ENCODE measurements at regions of chr1 and their contacts with region 1.

Region 1: GRCh38 chr1:234722904-234723720 is 113.1 kb upstream of the IRF2BP2 start:
- DNase-seq: peak; percentile 82
- ATAC-seq: no peak
- H3K4me3 ChIP-seq: peak overlapping the region in 1 of 3 experiments; percentile 61; a peak in 2 of 6 replicates
- H3K27ac ChIP-seq: peak overlapping the region; percentile 99
- H3K4me1 ChIP-seq: peaks cover 97% of the 10 kb centered on the region
- H3K27me3 ChIP-seq: no peaks in the 10 kb centered on the region
- CTCF ChIP-seq: no peak
- EP300 ChIP-seq: peak in 1 of 2 experiments; percentile 4; a peak in 1 of 4 replicates
- POLR2A ChIP-seq: peak in 1 of 2 experiments; percentile 48; a peak in 1 of 4 replicates
- RAD21 ChIP-seq: no peak

Region 2: DNA sequence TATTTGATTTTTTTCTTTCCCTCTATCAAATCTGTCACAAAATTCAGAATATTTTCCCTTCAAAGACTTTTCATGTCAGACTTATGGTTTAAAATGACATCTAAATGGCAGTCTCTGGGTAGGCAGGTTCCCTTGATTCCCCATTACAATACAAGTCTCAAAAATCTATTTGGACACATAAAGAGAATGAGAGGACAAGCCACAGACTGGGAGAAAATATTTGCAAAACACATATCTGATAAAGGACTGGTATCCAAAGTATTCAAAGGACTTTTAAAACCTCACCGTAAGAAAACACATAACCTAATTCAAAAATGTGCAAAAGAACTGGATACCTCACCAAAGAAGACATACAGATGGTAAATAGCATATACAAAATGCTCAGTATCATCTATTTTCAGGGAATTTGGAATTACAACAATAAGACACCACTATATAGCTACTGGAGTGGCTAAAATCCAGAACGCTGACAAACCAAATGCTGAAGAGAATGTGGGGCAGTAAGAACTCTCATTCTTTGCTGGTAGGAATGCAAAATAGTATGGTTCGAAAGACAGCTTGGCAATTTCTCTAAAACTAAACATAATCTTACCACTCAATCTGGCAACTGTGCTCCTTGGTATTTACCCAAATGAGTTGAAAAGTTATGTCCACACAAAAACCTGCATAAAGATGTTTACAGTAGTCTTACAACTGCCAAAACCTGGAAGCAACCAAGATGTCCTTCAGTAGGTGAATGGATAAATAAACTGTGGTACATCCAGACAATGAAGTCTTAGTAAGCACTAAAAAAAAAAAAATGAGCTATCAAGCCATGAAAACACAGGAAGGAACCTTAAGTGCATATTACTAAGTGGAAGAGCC is 270.8 kb before region 1 on chr1:
- CTCF ChIA-PET with region 1: no interaction called
- POLR2A ChIA-PET with region 1: no interaction called
- in situ Hi-C with region 1: no loop called
- intact Hi-C with region 1: no loop called
- DNase-seq: no peak
- ATAC-seq: no peak
- H3K4me3 ChIP-seq: no peak overlapping the region
- H3K27ac ChIP-seq: no peak overlapping the region
- H3K4me1 ChIP-seq: peaks cover 12% of the 10 kb centered on the region; the same call in 1 of the 2 replicates
- H3K27me3 ChIP-seq: no peaks in the 10 kb centered on the region
- CTCF ChIP-seq: no peak
- EP300 ChIP-seq: no peak
- POLR2A ChIP-seq: no peak
- RAD21 ChIP-seq: no peak

Region 3: GRCh38 chr1:234589854-234590620 is 133.1 kb before region 1 on chr1:
- CTCF ChIA-PET with region 1: no interaction called
- POLR2A ChIA-PET with region 1: no interaction called
- in situ Hi-C with region 1: no loop called
- intact Hi-C with region 1: no loop called
- DNase-seq: no peak
- ATAC-seq: no peak; the same call in 2 of the 3 replicates
- H3K4me3 ChIP-seq: no peak overlapping the region
- H3K27ac ChIP-seq: no peak overlapping the region
- H3K4me1 ChIP-seq: peaks cover 10% of the 10 kb centered on the region; the same call in 1 of the 2 replicates
- H3K27me3 ChIP-seq: peaks cover 3% of the 10 kb centered on the region in 2 experiments; a peak in 2 of 5 replicates
- CTCF ChIP-seq: no peak
- EP300 ChIP-seq: no peak
- POLR2A ChIP-seq: no peak
- RAD21 ChIP-seq: no peak

Region 4: GRCh38 chr1:234617131-234617985 is 105.8 kb before region 1 on chr1:
- CTCF ChIA-PET with region 1: no interaction called
- POLR2A ChIA-PET with region 1: interaction called, 1,137 read pairs
- in situ Hi-C with region 1: loop called (anchors 5 kb)
- intact Hi-C with region 1: loop called (anchors 1 kb)
- DNase-seq: no peak
- ATAC-seq: no peak
- H3K4me3 ChIP-seq: no peak overlapping the region
- H3K27ac ChIP-seq: peak overlapping the region; percentile 99
- H3K4me1 ChIP-seq: peaks cover 97% of the 10 kb centered on the region
- H3K27me3 ChIP-seq: no peaks in the 10 kb centered on the region
- CTCF ChIP-seq: no peak
- EP300 ChIP-seq: no peak
- POLR2A ChIP-seq: no peak
- RAD21 ChIP-seq: no peak

Region 5: GRCh38 chr1:234645474-234645953 is 77.6 kb before region 1 on chr1:
- CTCF ChIA-PET with region 1: no interaction called
- POLR2A ChIA-PET with region 1: interaction called, 89 read pairs
- in situ Hi-C with region 1: no loop called
- intact Hi-C with region 1: no loop called
- DNase-seq: no peak
- ATAC-seq: no peak
- H3K4me3 ChIP-seq: no peak overlapping the region
- H3K27ac ChIP-seq: peak overlapping the region; percentile 83
- H3K4me1 ChIP-seq: peaks cover 63% of the 10 kb centered on the region
- H3K27me3 ChIP-seq: no peaks in the 10 kb centered on the region
- CTCF ChIP-seq: no peak
- EP300 ChIP-seq: no peak
- POLR2A ChIP-seq: no peak
- RAD21 ChIP-seq: no peak

Region 6: DNA sequence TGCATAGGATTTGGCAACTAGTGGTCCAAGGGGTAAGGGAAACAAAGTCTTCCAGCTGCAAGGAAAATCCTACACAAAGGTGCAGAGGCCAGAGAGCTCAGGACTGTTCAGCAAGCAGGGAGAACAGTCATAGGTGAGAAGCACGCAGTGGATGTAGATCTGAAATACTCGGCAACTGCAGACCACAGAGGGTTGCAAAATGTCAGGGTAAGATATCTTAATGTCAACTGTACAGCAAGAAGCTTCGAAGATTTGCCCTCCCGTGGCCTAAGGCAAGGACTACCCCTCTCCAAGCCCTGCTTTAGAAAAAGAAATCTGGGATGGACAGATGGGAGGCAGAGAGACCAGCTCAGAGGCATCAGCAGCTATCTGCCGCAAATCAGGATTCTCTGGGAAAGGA is 40.3 kb after region 1 on chr1:
- CTCF ChIA-PET with region 1: no interaction called
- POLR2A ChIA-PET with region 1: interaction called, 97 read pairs
- in situ Hi-C with region 1: no loop called
- intact Hi-C with region 1: loop called (anchors 2 kb)
- DNase-seq: no peak
- ATAC-seq: no peak
- H3K4me3 ChIP-seq: no peak overlapping the region
- H3K27ac ChIP-seq: peak overlapping the region; percentile 41
- H3K4me1 ChIP-seq: peaks cover 80% of the 10 kb centered on the region
- H3K27me3 ChIP-seq: no peaks in the 10 kb centered on the region
- CTCF ChIP-seq: no peak
- EP300 ChIP-seq: no peak
- POLR2A ChIP-seq: no peak
- RAD21 ChIP-seq: no peak

Region 7: GRCh38 chr1:234823191-234824176 is 100.4 kb after region 1 on chr1:
- CTCF ChIA-PET with region 1: no interaction called
- POLR2A ChIA-PET with region 1: no interaction called
- in situ Hi-C with region 1: no loop called
- intact Hi-C with region 1: no loop called
- DNase-seq: no peak
- ATAC-seq: no peak
- H3K4me3 ChIP-seq: no peak overlapping the region
- H3K27ac ChIP-seq: no peak overlapping the region
- H3K4me1 ChIP-seq: peaks cover 17% of the 10 kb centered on the region
- H3K27me3 ChIP-seq: no peaks in the 10 kb centered on the region
- CTCF ChIP-seq: no peak
- EP300 ChIP-seq: no peak
- POLR2A ChIP-seq: no peak
- RAD21 ChIP-seq: no peak

Region 8: GRCh38 chr1:234875953-234876855 is 153.1 kb after region 1 on chr1:
- CTCF ChIA-PET with region 1: no interaction called
- POLR2A ChIA-PET with region 1: interaction called, 96 read pairs
- in situ Hi-C with region 1: loop called (anchors 5 kb)
- intact Hi-C with region 1: loop called (anchors 2 kb)
- DNase-seq: peak; percentile 98
- ATAC-seq: peak; percentile 74
- H3K4me3 ChIP-seq: peak overlapping the region; percentile 36 to 71 (median 49); a peak in 5 of 6 replicates
- H3K27ac ChIP-seq: peak overlapping the region; percentile 98
- H3K4me1 ChIP-seq: peaks cover 93% of the 10 kb centered on the region
- H3K27me3 ChIP-seq: no peaks in the 10 kb centered on the region; a peak in 1 of 5 replicates
- CTCF ChIP-seq: no peak; the same call in 1 of the 2 replicates
- EP300 ChIP-seq: peak; percentile 74 to 97; a peak in 3 of 4 replicates
- POLR2A ChIP-seq: peak; percentile 43 to 62; a peak in 2 of 4 replicates
- RAD21 ChIP-seq: peak; percentile 20; the same call in 1 of the 2 replicates

Region 9: DNA sequence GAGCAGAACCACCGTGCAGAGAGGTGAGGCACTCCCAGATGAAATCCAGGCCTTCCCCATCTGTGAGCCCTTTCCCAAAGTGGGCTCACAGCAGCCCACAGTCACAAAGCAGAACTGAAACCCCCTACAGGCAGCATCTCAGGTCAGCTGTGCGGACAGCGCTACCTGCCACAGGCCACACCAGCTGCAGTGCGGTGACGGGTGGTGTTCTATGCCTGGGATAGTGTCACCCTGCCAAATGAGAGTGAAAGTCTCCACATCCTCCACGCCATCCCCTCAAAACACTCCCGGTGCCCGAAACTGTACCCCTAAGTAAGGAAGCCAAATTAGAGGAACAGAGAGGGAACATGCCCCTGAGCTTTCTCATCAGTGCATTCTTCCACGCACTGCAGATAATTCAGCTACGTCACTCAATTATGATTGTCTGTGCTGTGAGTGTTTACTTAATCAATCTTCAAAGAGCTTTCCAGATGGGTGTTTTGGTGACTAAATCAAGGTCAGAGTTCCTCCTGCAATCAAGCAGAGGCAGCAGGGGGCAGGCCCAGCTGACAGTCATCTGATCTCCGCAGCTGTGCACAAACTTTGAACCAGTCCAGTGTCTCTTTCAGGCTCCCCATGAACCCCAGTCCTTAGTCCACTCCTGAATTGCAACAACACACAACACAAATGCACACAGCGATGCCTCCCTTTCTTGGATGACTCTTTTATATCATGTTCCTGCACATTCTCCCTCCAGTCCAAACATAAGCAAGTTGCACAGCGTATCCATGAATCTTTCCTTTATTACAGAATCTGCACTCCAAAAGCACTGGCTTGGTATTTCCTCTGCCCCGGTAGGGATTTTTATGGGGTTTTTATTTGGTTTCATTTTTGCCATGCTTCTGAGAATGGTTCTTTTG is 255.5 kb after region 1 on chr1:
- CTCF ChIA-PET with region 1: no interaction called
- POLR2A ChIA-PET with region 1: interaction called, 134 read pairs
- in situ Hi-C with region 1: loop called (anchors 5 kb)
- intact Hi-C with region 1: loop called (anchors 5 kb)
- DNase-seq: peak; percentile 96
- ATAC-seq: peak; percentile 12
- H3K4me3 ChIP-seq: no peak overlapping the region
- H3K27ac ChIP-seq: peak overlapping the region; percentile 100
- H3K4me1 ChIP-seq: peaks cover 99% of the 10 kb centered on the region
- H3K27me3 ChIP-seq: no peaks in the 10 kb centered on the region; a peak in 1 of 5 replicates
- CTCF ChIP-seq: peak; percentile 62
- EP300 ChIP-seq: peak; percentile 78 to 96; a peak in 3 of 4 replicates
- POLR2A ChIP-seq: peak in 1 of 2 experiments; percentile 24; a peak in 1 of 4 replicates
- RAD21 ChIP-seq: peak; percentile 56; the same call in 1 of the 2 replicates

Region 10: DNA sequence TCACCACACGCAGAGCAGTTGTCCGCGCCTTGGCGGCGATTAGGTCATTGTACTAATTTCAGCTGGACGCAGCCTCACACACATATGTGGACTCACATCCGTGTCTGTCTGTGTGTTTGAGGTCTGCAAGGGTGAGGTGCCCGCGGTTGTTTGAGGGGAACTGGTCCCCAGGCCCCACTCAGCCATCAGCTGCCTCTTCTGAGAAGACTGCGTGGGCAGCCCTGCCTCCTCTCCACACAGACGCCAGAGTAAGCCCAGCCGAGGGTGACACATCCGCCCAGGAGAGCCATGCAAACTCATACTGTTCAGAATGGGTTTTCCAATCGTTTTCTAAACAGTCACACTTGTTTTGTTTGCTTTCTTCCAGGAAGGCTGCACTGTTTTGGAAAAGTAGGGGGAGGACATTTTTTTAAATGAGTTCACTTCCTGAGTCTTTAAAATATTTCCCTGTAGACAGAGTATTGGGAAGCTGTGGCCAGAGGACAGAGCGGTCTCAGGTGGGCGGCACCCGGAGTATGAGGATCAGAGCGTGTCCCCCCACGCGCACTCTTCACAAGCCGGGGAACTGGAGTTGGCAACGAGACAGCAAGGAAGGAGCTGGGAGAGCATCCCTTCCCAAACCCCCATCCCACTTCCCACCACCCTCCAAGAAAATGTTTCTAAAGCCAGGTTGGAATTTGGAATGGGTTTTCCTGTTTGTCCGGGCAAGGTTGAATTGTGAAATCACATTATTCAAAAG is 352.2 kb after region 1 on chr1:
- CTCF ChIA-PET with region 1: no interaction called
- POLR2A ChIA-PET with region 1: interaction called, 79 read pairs
- in situ Hi-C with region 1: loop called (anchors 10 kb)
- intact Hi-C with region 1: no loop called
- DNase-seq: peak; percentile 89
- ATAC-seq: peak; percentile 57
- H3K4me3 ChIP-seq: peak overlapping the region; percentile 56 to 82 (median 58)
- H3K27ac ChIP-seq: peak overlapping the region; percentile 99
- H3K4me1 ChIP-seq: peaks cover 91% of the 10 kb centered on the region
- H3K27me3 ChIP-seq: no peaks in the 10 kb centered on the region; a peak in 1 of 5 replicates
- CTCF ChIP-seq: no peak
- EP300 ChIP-seq: peak in 1 of 2 experiments; percentile 59; a peak in 2 of 4 replicates
- POLR2A ChIP-seq: peak in 1 of 2 experiments; percentile 80; a peak in 2 of 4 replicates
- RAD21 ChIP-seq: no peak